Left cardiac atrium (tissue), 4 donors: ENCODE measurements at regions of chr15 and their contacts with region 1.

Region 1: GRCh38 chr15:33975022-33975565 is 6.8 kb downstream of the CHRM5 start:
- DNase-seq: no peak
- ATAC-seq: no peak

Region 2: DNA sequence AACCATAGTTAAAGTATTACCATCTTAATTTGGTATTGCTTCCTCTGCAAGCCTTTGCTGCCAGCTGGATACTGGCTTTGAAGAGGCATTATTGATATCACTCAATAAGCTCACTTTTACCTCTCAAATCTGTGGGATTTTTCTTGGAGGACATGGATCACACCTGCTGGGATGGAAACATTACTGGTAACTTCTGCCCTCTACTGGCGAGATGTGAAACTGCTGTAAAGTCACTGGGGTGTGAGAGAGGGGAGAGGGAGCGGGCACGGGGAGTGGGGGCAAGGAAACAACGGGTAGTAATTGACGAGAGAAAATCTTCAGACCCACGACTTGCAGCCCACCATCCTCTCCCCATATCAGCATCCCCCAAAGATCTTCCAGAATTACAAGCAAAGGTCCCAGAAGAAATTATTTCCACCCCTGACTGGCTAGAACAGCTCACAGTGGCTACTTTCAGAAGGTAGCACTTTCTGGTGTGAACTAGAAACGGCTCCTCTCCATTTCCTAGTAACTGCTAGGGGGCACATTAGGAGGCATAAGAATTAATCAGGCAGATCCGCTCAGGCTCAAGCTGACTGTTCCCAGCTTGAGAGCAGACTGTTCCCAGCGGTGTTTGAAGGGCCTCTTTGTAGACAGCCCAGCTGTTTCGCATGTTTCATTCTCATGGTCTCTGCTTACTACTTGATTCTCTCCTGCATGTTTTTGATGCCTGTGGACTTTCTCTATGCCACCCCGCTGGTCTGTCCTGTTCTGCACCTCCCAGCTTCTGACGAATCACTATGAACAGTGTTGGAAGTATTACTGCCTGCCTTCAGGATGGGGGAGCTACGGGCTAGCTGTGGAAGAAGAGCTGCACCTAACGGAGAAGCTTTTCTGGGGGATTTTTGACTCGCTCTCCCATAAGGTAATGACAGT is 237.2 kb before region 1 on chr15:
- intact Hi-C with region 1: loop called in 1 of 2 experiments (anchors 10 kb)
- DNase-seq: no peak
- ATAC-seq: peak; percentile 50 to 53

Region 3: GRCh38 chr15:34038023-34038870 is 63.2 kb after region 1 on chr15:
- intact Hi-C with region 1: no loop called
- DNase-seq: peak; percentile 89
- ATAC-seq: peak; percentile 95 to 96

Region 4: GRCh38 chr15:34246276-34246976 is 271.3 kb after region 1 on chr15:
- intact Hi-C with region 1: no loop called
- DNase-seq: no peak
- ATAC-seq: no peak